ENCODE measurements at regions of chr15 and their contacts with region 1.

Region 1: DNA sequence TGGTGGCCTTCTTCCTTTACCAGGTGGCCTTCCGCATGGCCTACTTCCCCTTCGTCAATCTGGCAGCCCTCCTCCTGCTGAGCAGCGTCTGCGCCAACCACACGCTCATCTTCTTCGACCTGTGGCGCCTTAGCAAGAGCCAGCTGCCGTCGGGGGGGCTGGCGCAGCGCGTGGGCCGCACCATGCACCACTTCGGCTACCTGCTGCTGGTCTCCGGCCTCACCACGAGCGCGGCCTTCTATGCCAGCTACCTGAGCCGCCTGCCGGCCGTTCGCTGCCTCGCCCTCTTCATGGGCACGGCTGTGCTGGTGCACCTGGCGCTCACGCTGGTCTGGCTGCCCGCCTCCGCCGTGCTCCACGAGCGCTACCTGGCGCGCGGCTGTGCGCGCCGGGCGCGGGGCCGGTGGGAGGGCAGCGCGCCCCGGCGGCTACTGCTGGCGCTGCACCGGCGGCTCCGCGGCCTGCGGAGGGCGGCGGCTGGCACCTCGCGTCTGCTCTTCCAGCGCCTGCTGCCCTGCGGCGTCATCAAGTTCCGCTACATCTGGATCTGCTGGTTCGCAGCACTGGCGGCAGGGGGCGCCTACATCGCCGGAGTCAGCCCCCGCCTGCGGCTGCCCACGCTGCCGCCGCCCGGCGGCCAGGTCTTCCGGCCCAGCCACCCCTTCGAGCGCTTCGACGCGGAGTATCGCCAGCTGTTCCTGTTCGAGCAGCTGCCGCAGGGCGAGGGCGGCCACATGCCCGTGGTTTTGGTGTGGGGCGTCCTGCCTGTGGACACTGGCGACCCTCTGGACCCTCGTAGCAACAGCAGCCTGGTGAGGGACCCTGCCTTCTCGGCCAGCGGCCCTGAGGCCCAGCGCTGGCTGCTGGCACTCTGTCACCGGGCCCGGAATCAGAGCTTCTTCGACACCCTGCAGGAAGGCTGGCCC is 9.9 kb downstream of the DISP2 start:
- DNase-seq: peak; percentile 27
- ATAC-seq: peak; percentile 93
- H3K4me3 ChIP-seq: peak overlapping the region; percentile 2; the same call in 1 of the 2 replicates
- H3K27ac ChIP-seq: no peak overlapping the region
- H3K4me1 ChIP-seq: peaks cover 8% of the 10 kb centered on the region
- H3K27me3 ChIP-seq: peaks cover 3 to 5% of the 10 kb centered on the region in 2 experiments
- CTCF ChIP-seq: peak; percentile 67 to 88 (median 81)
- EP300 ChIP-seq: no peak
- POLR2A ChIP-seq: no peak; the same call in 1 of the 2 replicates
- RAD21 ChIP-seq: peak; percentile 54

Region 2: DNA sequence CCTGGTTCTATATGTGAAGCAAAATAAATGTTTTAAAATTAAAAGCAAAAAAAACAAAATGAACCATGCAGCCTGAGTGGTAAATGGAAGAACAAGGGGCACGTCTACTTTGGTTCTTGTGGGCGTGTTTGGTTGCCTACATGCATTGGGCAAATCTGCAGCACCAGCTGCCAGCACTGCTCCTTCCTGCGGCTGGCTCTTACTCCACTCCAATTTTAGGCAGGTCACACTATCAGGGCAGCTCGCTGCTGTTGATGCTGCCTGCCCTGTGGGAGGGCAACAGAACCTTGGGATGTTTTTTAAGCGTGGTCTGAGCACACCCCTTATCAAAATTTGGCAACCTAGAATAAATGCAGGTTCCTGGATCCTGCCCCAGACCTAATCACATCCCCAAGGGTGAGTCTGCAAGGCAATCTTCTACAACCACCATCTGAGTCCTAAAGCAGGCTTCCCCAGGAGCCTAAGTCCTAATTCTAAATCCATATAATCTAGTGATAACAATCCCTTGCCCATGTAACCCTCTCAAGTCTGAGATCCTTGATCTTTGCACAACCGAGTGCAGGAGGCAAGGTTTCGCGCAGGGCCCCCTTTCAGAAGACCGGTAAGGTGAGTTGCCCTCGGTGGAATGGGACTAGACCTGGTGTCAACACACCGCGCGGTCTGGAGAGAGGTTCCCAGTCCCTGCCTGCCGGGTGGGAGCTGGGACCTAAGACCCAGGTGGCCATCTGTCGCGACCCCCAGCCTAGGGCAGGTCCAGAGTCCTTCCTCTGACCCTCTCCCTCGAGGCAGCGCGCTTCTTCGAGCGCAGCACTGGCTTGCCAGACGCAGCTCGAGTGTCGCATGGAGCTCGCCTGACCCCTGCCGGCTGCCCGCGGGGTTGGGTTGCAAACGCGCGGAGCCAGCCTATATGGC is 53.6 kb after region 1 on chr15:
- CTCF ChIA-PET with region 1: interaction called, 58 read pairs
- POLR2A ChIA-PET with region 1: interaction called, 3 read pairs
- RAD21 ChIA-PET with region 1: interaction called, 3 read pairs
- SMC1A ChIA-PET with region 1: interaction called, 8 read pairs
- in situ Hi-C with region 1: no loop called
- intact Hi-C with region 1: loop called (anchors 1 kb)
- DNase-seq: no peak
- ATAC-seq: peak; percentile 99
- H3K4me3 ChIP-seq: no peak overlapping the region
- H3K27ac ChIP-seq: no peak overlapping the region
- H3K4me1 ChIP-seq: no peaks in the 10 kb centered on the region
- H3K27me3 ChIP-seq: no peaks in the 10 kb centered on the region
- CTCF ChIP-seq: peak; percentile 93 to 98 (median 97)
- EP300 ChIP-seq: no peak
- POLR2A ChIP-seq: peak; percentile 73
- RAD21 ChIP-seq: peak; percentile 95